ENCODE measurements at regions of chr19 and their contacts with region 1.

Region 1: DNA sequence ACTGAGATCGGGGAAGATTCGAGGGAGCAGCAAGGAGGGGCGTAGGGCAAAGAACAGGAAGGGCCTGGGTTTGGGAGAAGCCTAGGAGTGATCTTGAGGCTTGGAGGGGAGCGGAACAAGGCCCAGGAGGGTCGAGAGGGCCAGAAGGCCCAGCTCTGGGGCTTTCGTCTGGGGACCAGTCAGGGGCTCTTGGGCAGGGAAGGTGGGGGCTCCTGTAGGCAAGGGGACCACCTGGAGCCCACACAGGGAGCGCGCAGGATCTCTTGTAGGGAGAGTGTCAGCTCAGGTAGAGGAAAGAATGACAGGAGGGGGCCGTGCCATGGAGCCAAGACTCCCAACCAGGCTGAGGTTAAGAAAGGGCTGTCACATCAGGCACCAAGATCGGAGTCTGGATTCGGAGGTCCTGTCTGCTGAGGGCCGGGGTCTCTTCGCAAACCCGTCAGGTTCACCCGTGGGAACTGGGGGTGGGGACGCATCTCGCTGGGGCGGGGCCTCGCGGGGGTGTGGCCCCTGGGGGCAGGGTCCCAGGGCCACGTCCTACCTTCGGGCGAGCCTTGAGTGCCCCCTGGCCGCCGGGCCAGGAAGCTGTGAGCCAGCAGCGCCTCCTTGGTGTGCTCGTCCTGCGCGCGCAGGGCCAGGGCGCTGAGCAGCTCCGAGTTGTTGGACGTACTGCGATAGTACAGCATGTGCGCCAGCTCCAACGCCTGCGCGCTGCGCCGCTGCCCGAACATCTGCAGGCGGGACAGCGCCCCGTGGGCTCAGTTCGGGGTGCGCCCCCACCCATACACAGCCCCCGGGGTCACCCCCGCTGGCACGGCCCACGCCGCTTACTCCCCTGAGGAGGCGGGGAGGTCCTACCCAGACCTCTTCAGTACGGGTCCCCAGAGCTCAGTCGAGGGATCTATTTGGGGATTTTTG is 8.4 kb downstream of the EMP3 start:
- DNase-seq: peak; percentile 92
- ATAC-seq: peak; percentile 74
- H3K4me3 Mint-ChIP-seq: peak overlapping the region; percentile 84
- H3K27ac Mint-ChIP-seq: peak overlapping the region; percentile 97
- H3K4me1 Mint-ChIP-seq: peaks cover 30% of the 10 kb centered on the region
- H3K27me3 Mint-ChIP-seq: peaks cover 10% of the 10 kb centered on the region
- CTCF ChIP-seq: peak; percentile 29; the same call in 1 of the 2 replicates

Region 2: GRCh38 chr19:48290771-48291488 is 42.8 kb before region 1 on chr19:
- CTCF ChIA-PET with region 1: interaction called, 27 read pairs
- POLR2A ChIA-PET with region 1: interaction called, 3 read pairs
- DNase-seq: peak; percentile 88
- ATAC-seq: peak; percentile 63
- H3K4me3 Mint-ChIP-seq: peak overlapping the region; percentile 74
- H3K27ac Mint-ChIP-seq: peak overlapping the region; percentile 65; the same call in 1 of the 2 replicates
- H3K4me1 Mint-ChIP-seq: peaks cover 15% of the 10 kb centered on the region
- H3K27me3 Mint-ChIP-seq: no peaks in the 10 kb centered on the region
- CTCF ChIP-seq: peak; percentile 96

Region 3: DNA sequence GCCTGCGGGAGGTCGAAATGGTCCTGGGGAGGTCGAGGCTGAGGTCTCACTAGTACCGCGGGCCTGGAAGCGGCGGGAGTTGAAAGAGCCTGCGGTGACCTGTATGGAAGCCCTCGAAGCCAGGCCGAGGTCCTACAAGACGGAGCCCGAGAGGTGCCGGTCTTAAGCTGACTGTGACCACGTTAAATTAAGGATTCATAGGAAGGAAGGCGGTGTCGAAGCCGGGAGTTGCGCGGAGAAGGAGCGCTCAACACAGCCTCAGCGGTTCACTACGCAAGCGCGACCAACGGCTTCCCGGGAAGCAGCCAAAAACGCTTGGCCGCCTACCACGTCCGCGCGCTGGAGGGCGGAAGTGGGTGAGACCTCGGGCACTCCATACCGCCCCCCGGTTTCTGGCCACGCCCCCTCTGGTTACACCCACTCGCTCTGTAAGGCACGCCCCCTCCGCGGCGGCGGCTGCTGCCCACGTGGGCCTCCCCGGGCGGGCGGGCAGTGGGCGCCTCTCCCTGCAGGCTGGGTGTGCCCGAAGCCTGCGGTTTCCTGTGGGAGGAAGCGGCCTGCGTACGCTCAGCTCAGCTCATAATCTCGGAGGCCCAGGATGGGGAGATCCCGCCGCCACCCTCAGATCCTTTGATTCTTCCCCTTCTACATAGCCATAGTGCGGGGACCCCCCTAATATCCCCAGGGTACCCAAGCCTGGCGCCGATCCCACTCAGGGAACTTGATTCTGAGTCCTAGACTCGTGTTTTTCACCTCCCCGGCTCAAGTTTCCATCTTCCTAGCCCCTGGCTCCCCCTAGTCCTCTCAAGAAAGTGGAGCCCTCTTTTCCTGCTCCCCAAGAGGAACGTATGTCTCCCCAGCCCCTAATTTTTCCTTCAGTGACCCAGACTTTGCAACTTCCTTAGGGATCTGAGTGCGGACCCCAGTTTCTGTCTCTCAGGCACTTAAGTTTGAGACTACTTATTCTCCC is 11.8 kb before region 1 on chr19:
- CTCF ChIA-PET with region 1: interaction called, 404 read pairs
- POLR2A ChIA-PET with region 1: interaction called, 16 read pairs
- DNase-seq: peak; percentile 97
- ATAC-seq: peak; percentile 56
- H3K4me3 Mint-ChIP-seq: peak overlapping the region; percentile 91
- H3K27ac Mint-ChIP-seq: peak overlapping the region; percentile 98
- H3K4me1 Mint-ChIP-seq: peaks cover 53% of the 10 kb centered on the region
- H3K27me3 Mint-ChIP-seq: peaks cover 43% of the 10 kb centered on the region
- CTCF ChIP-seq: no peak

Region 4: DNA sequence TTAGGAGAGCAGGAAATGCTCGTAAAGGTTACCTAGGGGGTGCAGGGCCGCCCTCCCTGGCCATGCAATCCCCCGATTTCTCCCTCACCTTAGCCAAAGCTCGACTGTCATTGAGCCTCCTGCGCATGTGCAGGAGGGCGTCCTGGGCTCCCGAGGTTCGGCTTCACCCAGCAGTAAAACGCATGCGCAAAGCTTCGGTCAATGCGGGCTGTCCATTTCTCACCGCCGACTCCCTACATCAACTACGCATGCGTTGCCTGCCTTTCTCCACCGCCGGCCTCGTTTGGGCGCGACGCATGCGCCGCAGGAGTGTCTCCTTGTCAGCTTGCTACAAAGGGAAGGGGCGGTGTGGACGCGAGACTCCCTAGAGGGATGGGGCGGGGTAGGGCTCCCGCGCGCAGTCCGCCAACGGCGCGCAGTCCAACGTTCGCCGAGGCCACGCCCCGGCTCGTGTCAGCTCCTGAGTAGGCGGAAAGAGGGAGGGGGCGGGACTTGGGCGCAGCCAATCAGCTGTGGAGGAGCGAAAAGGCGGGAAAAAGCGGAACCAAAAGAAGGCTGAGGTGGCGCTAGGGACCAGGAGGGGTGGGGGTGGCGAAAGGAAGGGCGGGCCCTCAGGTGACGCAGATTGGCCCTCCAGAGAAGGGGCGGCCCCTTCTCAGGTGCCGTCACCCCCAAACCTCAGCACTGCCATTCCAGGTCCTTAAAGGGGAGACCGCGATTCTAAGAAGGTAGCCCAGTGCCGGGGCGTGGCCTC is 30.3 kb after region 1 on chr19 and contains the starts of genes SYNGR4 and TMEM143:
- CTCF ChIA-PET with region 1: interaction called, 52 read pairs
- POLR2A ChIA-PET with region 1: interaction called, 13 read pairs
- DNase-seq: peak; percentile 99
- ATAC-seq: peak; percentile 87
- H3K4me3 Mint-ChIP-seq: peak within 1 kb of the TSS; percentile 81
- H3K27ac Mint-ChIP-seq: peak within 1 kb of the TSS; percentile 97
- H3K4me1 Mint-ChIP-seq: peaks cover 9% of the 10 kb centered on the region
- H3K27me3 Mint-ChIP-seq: peaks cover 18% of the 10 kb centered on the region
- CTCF ChIP-seq: no peak
- total RNA-seq, gene SYNGR4: not detected in 3 replicates
- total RNA-seq, gene TMEM143: 20.2 to 29.6 TPM (median 27.0 TPM) in 3 replicates

Region 5: GRCh38 chr19:48492925-48493717 is 159.4 kb after region 1 on chr19:
- CTCF ChIA-PET with region 1: interaction called, 12 read pairs
- POLR2A ChIA-PET with region 1: interaction called, 3 read pairs
- DNase-seq: peak; percentile 99
- ATAC-seq: peak; percentile 81
- H3K4me3 Mint-ChIP-seq: peak overlapping the region; percentile 81
- H3K27ac Mint-ChIP-seq: peak overlapping the region; percentile 98
- H3K4me1 Mint-ChIP-seq: peaks cover 29% of the 10 kb centered on the region
- H3K27me3 Mint-ChIP-seq: peaks cover 35% of the 10 kb centered on the region
- CTCF ChIP-seq: no peak